Left ventricle myocardium superior (tissue), 1 donor: ENCODE measurements at regions of chr12 and their contacts with region 1.

Region 1: DNA sequence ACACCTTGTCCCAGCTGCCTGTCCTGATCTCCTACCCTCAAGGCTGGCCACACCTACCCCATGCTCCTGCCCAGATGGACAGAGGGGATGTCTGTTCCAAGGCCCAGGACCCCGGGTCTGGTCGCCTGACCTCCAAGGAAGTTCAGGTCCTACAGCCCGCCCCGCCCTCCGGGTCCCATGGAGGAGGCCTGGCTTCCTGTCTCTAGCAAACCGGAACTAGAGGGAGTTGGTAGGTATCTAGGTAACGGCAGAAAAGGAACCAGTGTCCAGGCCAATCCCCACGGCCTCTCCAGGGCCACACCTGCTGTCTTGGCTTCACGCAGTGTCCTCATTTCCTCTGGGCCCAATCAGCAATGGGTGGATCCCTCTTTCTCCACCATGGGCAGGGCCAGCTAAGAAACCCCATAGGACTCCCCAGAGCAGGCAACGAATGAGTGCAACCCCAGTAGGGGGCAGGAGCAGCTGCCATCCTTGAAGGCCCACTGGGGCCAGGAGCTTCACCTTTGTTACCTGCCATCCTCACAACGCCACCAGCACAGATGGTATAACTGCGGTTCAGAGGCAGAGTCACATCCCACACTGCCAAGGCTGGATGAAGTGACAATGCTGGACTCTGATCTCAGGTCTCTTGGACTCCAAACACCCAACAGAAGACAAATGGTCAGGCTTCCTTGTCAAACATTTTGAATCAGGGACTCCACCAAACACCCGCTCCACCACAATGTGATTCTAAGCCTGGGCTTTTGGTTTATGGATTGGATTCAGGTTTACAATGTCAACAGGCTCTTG is 25.1 kb upstream of the RPLP0 start:
- DNase-seq: no peak
- ATAC-seq: no peak

Region 2: GRCh38 chr12:120156315-120157259 is 69.5 kb before region 1 on chr12:
- intact Hi-C with region 1: no loop called
- DNase-seq: no peak
- ATAC-seq: no peak

Region 3: DNA sequence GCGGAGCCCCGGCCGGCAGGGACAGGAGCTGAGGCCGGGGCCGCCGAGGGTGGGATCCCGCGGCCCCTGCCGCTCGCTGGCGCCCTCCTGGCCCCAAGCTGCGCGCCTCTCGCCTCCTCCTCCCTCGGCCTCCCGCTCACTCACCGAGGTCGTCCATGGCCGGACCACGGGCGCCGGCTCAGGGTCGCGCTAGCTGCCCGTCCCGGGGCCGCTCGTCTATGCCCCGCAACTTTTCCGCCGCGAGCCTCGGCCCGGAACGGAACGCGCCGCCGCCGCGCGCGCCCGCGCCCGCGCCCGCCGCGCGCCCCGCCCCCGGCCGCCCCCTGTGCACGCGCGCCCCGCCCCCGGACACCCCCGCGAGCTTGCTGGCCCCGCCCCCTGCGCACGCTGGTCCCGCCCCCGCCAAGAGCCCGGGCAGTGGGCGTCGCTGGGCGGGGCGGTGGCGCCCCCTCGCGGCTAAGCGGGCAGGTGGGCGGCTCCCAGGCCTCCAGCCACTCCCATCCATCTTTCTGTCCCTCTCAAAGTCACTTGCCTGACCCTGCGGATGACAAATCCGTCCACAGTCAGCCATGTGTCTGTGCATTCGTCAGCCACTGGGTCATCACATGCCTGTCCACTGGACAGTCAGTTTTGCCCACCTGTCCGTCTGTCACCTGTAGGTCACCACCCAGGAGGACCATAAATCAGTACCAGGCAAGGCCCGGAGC is 39.6 kb after region 1 on chr12 and contains the start of gene PXN:
- intact Hi-C with region 1: loop called (anchors 2 kb)
- DNase-seq: peak; percentile 94
- ATAC-seq: peak; percentile 83
- total RNA-seq, gene PXN: 65.9 TPM

Region 4: GRCh38 chr12:120376416-120376815 is 150.4 kb after region 1 on chr12:
- intact Hi-C with region 1: no loop called
- DNase-seq: no peak
- ATAC-seq: no peak